ENCODE measurements at regions of chr18 and their contacts with region 1.

Region 1: DNA sequence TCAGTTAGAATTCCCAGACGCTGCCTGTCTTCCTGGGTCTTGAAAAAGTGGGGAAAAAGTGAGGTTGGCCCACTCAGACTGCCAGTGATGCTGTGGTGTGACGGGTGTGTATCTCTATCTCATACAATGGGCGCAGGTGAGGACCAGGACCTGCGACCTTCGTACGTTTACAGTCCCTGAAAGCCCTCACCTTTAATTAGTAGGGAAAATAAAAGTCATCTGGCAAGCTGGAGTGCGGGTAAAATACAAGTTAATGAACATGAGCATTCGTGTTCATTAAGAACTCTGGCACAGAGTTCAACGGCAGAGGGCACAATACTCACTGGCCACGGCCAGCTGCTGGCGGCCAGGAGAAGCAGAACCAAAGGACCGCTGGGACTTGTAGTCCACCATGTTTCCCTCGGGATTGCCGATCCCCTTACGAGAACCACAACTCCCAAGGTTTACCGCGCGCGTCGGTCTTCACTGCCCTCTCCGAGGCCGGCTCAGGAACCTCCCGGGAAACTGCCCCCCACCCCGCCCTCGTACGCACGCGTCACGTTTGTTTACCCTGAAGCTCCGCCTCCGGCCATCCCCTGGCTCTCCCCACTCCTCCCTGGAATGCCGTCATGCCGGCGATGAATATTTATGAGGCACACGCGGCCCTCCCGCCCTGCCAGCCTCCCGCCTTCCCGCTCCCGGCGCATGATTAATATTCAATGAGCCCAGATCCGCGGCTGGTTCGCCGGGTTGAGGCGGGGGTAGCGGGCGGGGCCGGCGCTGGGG is 488 bp upstream of the PHLPP1 start:
- DNase-seq: peak; percentile 100
- ATAC-seq: peak; percentile 96 to 99 (median 99)
- H3K4me3 ChIP-seq: peak overlapping the region; percentile 56 to 88 (median 76)
- H3K27ac ChIP-seq: peak overlapping the region; percentile 66 to 98 (median 91)
- H3K4me1 ChIP-seq: peaks cover 0 to 35% (median 17%) of the 10 kb centered on the region in 12 donors
- H3K27me3 ChIP-seq: no peaks in the 10 kb centered on the region
- CTCF ChIP-seq: peak; percentile 65 to 95 (median 84)
- POLR2A ChIP-seq: no peak

Region 2: GRCh38 chr18:62522504-62523254 is 192.2 kb before region 1 on chr18 and contains the start of gene ZCCHC2:
- intact Hi-C with region 1: loop called in 3 of 10 experiments (anchors 5 to 10 kb)
- DNase-seq: peak; percentile 98 to 99 (median 99)
- ATAC-seq: peak; percentile 82 to 92 (median 90)
- H3K4me3 ChIP-seq: peak within 1 kb of the TSS; percentile 66 to 98 (median 94)
- H3K27ac ChIP-seq: peak within 1 kb of the TSS; percentile 90 to 100 (median 98)
- H3K4me1 ChIP-seq: peaks cover 3 to 36% (median 24%) of the 10 kb centered on the region in 12 donors
- H3K27me3 ChIP-seq: no peaks in the 10 kb centered on the region
- CTCF ChIP-seq: no peak
- POLR2A ChIP-seq: peak; percentile 78 to 89
- total RNA-seq, gene ZCCHC2: 11.2 to 27.5 (median 18.9) TPM

Region 3: DNA sequence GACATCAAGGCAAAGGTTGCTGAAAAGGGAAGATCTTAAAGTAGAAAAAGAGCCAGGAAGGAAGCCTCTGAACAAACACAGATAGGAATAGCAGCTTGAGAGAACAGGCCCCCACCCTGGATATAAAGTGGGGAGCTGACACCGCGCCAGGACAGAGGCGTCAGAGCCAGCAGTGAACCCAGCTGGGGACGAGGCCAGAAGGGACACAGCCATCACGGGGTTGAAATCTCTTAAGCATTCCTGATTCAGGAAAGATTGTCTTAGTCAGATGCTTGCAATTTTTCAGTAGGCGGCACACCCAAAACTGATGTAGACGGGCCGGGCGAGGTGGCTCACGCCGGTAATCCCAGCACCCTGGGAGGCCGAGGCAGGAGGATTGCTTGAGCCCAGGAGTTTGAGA is 93.3 kb before region 1 on chr18:
- intact Hi-C with region 1: loop called in 1 of 10 experiments (anchors 10 kb)
- DNase-seq: peak; percentile 61 to 80 (median 75)
- ATAC-seq: peak; percentile 57 to 90 (median 83)
- H3K4me3 ChIP-seq: no peak overlapping the region
- H3K27ac ChIP-seq: peak overlapping the region in 11 of 12 donors; percentile 26 to 80 (median 72)
- H3K4me1 ChIP-seq: peaks cover 0 to 32% (median 11%) of the 10 kb centered on the region in 12 donors
- H3K27me3 ChIP-seq: no peaks in the 10 kb centered on the region
- CTCF ChIP-seq: no peak
- POLR2A ChIP-seq: peak in 1 of 2 donors; percentile 14

Region 4: DNA sequence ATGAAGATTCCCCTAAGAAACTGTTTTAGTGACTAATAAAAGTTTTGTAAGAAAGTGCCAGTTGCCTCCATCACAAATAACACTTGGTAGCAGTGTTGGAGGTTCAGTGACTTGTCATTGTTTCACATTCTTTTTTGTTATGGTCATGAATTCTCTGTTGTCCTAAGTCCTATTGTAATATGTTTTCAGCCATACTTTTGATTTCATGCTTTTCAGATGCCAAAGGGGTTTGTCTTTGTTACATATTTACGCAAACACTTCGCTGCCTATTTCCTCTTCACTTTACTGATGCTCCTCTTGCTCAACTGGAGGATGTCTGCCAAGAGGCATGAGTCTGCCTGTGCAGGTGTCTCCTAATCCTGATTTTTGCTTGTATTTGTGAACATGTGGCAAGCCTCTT is 67.0 kb after region 1 on chr18:
- intact Hi-C with region 1: no loop called
- DNase-seq: no peak
- ATAC-seq: peak in 2 of 4 donors; percentile 24 to 38
- H3K4me3 ChIP-seq: no peak overlapping the region
- H3K27ac ChIP-seq: peak overlapping the region in 1 of 12 donors; percentile 6
- H3K4me1 ChIP-seq: peaks cover 0 to 30% (median 11%) of the 10 kb centered on the region in 12 donors
- H3K27me3 ChIP-seq: no peaks in the 10 kb centered on the region
- CTCF ChIP-seq: no peak
- POLR2A ChIP-seq: no peak

Region 5: GRCh38 chr18:62944454-62944853 is 229.6 kb after region 1 on chr18:
- intact Hi-C with region 1: loop called in 2 of 10 experiments (anchors 5 kb)
- DNase-seq: no peak
- ATAC-seq: no peak
- H3K4me3 ChIP-seq: no peak overlapping the region
- H3K27ac ChIP-seq: no peak overlapping the region
- H3K4me1 ChIP-seq: peaks cover 0 to 8% (median 5%) of the 10 kb centered on the region in 12 donors
- H3K27me3 ChIP-seq: no peaks in the 10 kb centered on the region
- CTCF ChIP-seq: no peak
- POLR2A ChIP-seq: no peak

Region 6: DNA sequence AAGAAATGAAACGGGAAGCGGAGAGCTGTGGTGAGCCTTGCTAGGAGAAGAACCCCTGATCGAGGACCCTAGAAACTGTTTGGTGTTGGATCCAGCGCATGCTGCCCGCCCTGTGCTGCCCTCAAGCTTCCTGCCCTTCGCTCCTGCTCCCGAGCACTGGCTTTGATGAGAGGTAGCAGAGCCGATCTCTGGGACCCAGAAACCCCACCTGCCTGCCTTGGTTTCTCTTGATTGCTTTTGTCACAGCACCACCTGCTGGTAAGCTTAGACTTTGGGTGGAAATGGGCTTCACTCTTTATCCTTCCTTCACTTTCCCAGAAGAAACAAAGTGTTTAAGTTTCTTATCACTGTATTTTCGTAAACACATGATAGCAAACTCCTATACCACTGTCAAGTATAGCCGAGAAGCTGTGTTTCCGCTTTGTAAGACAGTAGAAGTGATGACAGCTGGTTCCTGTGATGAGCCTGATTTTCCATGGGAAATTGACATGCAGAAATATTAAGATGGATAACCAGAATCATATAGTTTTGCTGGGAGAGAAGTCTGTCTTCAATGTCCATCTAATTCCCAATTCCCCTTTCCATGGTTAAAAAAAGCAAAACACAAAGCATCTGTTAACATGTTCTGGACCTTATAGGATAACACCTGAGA is 267.9 kb after region 1 on chr18:
- intact Hi-C with region 1: loop called (anchors 1 to 5 kb)
- DNase-seq: peak in 3 of 5 donors; percentile 45 to 60 (median 56)
- ATAC-seq: peak; percentile 32 to 82 (median 66)
- H3K4me3 ChIP-seq: peak overlapping the region in 9 of 12 donors; percentile 21 to 57 (median 44)
- H3K27ac ChIP-seq: no peak overlapping the region
- H3K4me1 ChIP-seq: peaks cover 0 to 11% (median 3%) of the 10 kb centered on the region in 12 donors
- H3K27me3 ChIP-seq: no peaks in the 10 kb centered on the region
- CTCF ChIP-seq: peak; percentile 64 to 87 (median 78)
- POLR2A ChIP-seq: no peak

Measured in heart left ventricle (tissue), 16 donors.